ENCODE measurements at regions of chr10 and their contacts with region 1.

Region 1: GRCh38 chr10:113711142-113711541 is 31.4 kb downstream of the CASP7 start:
- DNase-seq: no peak
- H3K4me3 ChIP-seq: no peak overlapping the region
- H3K27ac ChIP-seq: no peak overlapping the region
- H3K4me1 ChIP-seq: no peaks in the 10 kb centered on the region
- H3K27me3 ChIP-seq: no peaks in the 10 kb centered on the region
- CTCF ChIP-seq: no peak

Region 2: DNA sequence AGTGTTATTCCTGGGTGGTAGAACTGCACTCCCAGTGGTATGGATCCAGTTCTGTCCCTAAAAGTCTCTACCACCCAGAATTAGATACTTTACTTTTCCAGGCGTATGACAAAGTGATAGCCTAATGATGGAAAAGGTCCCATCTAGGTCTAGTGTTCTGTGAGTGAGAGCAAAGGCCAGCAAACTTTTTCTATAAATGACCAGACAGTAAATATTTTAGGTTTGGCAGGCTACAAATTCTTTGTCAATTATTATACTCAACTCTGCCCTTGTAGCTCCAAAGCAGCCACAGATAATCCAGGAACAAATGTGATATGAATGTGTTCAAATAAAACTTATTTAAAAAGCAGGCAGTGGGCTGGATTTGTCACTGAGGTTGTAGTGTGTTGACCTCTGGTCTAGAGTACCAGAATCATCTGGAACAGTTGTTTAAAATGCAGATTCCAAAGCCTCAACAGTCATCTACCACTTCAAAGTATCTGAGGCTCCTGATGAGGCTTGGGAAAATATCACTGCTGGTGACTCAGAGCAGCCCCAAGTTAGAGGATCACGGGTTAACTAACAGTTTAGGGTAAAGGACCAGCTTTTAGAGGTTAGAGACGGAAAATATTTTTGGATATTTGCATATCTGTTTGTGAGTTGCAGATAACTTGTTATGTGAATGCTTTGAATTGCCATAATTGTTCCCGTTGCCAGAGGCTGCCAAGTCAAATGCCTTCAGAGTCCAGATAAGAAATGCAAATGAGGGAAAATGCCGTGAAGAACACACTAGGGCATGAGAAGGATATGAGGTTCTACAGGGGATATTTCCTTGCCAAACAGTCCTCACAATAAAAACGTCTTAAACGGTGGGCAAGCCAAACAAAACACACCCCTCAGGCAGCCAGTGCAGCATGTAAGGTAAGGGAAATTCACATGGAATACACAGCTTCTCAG is 66.7 kb before region 1 on chr10:
- CTCF ChIA-PET with region 1: no interaction called
- dilution Hi-C with region 1: no loop called
- in situ Hi-C with region 1: no loop called
- intact Hi-C with region 1: no loop called
- DNase-seq: peak; percentile 55
- H3K4me3 ChIP-seq: no peak overlapping the region
- H3K27ac ChIP-seq: no peak overlapping the region
- H3K4me1 ChIP-seq: no peaks in the 10 kb centered on the region
- H3K27me3 ChIP-seq: peaks cover 4% of the 10 kb centered on the region
- CTCF ChIP-seq: no peak

Region 3: GRCh38 chr10:113808168-113808567 is 97.0 kb after region 1 on chr10:
- CTCF ChIA-PET with region 1: no interaction called
- dilution Hi-C with region 1: loop called (anchors 5 kb)
- in situ Hi-C with region 1: no loop called
- intact Hi-C with region 1: no loop called
- DNase-seq: no peak
- H3K4me3 ChIP-seq: no peak overlapping the region
- H3K27ac ChIP-seq: no peak overlapping the region
- H3K4me1 ChIP-seq: no peaks in the 10 kb centered on the region
- H3K27me3 ChIP-seq: no peaks in the 10 kb centered on the region
- CTCF ChIP-seq: no peak

Region 4: GRCh38 chr10:113899952-113900598 is 188.9 kb after region 1 on chr10:
- CTCF ChIA-PET with region 1: no interaction called
- dilution Hi-C with region 1: loop called (anchors 5 kb)
- in situ Hi-C with region 1: no loop called
- intact Hi-C with region 1: no loop called
- DNase-seq: no peak
- H3K4me3 ChIP-seq: no peak overlapping the region
- H3K27ac ChIP-seq: no peak overlapping the region
- H3K4me1 ChIP-seq: peaks cover 6% of the 10 kb centered on the region
- H3K27me3 ChIP-seq: no peaks in the 10 kb centered on the region
- CTCF ChIP-seq: no peak

Region 5: DNA sequence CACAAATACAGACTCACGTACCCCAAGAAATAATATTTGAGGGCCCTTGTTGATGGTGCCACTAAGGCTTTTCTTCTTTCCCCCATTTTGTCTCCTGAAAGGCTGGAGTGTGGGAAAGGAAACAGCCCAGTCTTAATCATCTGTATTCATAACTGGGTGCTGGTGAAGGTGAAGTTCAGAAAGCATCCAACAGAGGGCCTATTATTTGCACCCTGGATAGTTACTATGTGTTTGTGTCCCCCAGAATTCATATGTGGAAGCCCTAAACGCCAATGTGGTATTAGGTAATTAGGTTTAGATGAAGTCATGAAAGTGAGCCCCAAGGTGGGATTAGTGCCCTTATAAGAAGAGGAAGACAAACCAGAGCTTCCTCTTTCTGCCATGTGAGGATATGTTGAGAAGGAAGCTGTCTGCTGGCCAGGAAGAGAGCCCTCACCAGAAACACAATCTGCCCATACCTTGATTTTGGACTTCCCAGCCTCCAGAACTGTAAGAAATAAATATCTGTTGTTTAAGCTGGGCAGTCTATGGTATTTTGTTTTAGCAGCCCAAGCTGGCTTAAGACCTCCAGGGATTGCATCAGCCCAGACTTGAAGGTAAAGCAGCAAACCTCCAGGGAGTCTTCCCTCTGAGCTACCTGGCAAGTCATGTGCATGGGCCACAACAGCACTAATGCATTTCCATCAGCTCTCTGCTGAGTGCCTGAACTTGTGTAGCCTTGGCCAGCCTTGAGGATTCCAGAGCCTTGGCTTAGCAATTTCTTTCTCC is 242.5 kb after region 1 on chr10:
- CTCF ChIA-PET with region 1: no interaction called
- dilution Hi-C with region 1: no loop called
- in situ Hi-C with region 1: no loop called
- intact Hi-C with region 1: no loop called
- DNase-seq: no peak
- H3K4me3 ChIP-seq: no peak overlapping the region
- H3K27ac ChIP-seq: no peak overlapping the region
- H3K4me1 ChIP-seq: peaks cover 18% of the 10 kb centered on the region
- H3K27me3 ChIP-seq: no peaks in the 10 kb centered on the region
- CTCF ChIP-seq: peak; percentile 16 to 33

Region 6: DNA sequence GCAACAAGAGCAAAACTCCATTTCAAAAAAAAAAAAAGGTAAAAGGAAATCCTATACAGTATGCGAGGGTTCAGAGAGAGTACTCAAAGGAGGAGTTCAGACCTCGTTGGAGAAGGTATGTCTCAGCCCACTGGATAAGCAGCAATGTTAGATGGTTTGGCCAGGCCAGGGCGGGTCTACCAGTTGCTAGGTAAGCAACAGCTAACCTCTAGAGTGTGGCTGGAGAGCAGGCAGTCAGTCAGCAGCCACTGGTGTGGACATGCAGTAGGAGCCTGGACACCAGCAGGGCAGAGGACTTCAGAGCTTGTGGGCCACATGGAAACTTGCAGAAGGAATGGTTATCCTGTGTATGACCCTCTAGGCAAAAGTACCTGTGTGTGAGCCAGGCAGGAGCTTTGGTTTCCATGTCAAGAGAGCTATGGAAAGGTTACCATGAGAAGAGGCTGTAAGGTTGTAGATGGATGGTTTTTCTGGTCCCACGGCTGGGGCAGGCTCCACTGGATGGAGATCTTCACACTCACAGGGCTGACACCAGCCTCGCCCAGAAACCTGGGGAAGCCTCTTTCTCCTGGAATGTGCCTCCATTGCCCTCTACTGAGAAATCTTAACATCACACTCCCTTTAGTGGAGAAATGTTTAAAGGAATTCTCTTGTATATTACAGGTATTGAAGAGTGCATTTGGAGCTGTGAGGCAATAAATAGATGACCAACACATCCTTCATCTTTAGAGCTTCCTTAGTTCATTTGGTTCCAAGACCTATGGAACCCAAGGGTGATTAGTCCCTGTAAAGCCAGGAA is 399.2 kb after region 1 on chr10:
- CTCF ChIA-PET with region 1: no interaction called
- dilution Hi-C with region 1: loop called (anchors 5 kb)
- in situ Hi-C with region 1: loop called in 1 of 2 experiments (anchors 10 kb)
- intact Hi-C with region 1: no loop called
- DNase-seq: peak; percentile 39
- H3K4me3 ChIP-seq: no peak overlapping the region
- H3K27ac ChIP-seq: no peak overlapping the region
- H3K4me1 ChIP-seq: no peaks in the 10 kb centered on the region
- H3K27me3 ChIP-seq: no peaks in the 10 kb centered on the region
- CTCF ChIP-seq: peak; percentile 40 to 51